Vagina (tissue), 2 donors: ENCODE measurements at regions of chr1 and their contacts with region 1.

Region 1: DNA sequence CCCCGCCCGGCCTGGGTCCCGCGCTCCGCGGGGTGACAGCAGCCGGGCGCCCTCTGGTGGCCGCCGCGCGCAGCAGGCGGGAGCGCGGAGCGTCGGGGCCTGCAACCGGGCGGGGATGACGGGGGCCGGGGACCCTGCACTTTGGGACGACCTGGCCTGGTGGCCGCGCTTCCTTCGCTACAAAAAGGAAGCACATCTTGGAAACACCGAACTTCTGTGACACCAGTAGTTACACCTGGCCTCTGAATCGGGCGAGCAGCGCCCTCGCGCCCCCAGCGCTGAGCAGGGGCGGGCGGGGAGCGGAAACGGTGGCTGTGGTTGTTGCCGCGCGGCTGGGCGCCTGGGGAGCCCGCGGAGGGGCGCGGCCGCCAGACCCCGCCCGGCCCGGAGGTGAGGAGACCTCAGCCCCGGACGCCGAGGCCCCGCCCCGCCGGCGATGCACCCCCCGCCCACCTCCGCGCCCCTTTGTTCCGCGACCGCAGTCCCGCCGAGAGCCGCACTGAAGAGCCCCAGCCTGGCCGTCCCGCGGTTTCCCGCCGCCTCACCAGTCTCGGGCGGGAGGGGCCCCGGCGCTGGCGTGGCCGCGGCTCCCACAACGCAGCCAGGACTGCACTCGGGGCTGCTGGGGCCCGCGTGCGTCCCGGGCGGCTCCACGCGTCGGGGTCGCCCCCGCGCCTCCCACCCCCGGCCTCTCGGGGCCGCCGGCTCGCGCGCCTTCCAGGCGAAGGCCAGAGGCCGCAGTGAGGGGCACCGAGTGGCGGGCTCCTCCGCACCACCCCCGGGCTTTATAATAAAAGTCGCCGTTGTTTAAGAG is 59.3 kb downstream of the H3-3A start:
- DNase-seq: no peak
- H3K4me3 ChIP-seq: peak overlapping the region; percentile 73 to 90
- H3K27ac ChIP-seq: peak overlapping the region; percentile 84
- H3K4me1 ChIP-seq: peaks cover 18% of the 10 kb centered on the region
- H3K27me3 ChIP-seq: no peaks in the 10 kb centered on the region
- CTCF ChIP-seq: peak; percentile 41 to 91 (median 67)
- POLR2A ChIP-seq: no peak

Region 2: DNA sequence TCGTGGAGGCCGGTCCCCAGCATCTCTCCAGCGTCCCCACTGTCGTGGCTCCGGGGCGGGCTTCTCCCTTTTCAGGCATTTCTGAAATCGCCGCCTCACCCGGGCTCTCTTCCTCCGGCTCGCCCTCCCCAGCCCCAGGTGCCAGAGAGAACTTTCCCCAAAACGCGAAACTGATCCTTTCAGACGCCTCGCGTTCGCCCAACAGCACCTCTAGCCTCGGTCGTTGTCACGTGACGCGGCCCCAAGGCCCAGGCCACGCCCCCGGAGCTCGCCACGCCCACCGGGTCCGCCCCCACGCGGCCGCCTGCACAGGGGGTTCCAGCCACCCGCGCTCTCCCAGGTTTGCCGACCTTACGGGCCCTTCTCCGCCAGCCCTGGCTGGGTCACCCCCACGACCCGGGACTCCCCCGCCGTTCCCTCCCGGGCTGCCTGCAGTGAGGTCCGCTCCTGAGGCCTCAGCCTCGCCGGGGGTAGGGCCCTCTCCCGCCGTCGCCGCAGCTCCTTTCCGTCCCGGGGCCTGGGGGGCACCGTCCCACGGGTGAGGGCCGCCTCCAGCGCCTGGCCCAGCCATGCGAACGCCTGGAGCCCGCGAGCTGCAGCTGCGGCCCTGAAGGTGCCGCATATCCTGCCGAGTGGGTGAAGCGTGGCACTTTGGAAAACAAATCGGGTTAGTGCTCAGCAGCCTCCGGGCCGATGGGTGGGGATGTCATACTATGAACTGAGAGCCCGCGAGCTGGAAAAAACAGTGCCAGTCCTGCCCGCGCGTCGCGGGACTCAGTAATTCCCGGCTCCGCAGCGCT is 38.3 kb before region 1 on chr1:
- intact Hi-C with region 1: loop called (anchors 5 kb)
- DNase-seq: no peak
- H3K4me3 ChIP-seq: peak overlapping the region; percentile 81 to 84
- H3K27ac ChIP-seq: peak overlapping the region; percentile 70
- H3K4me1 ChIP-seq: peaks cover 7% of the 10 kb centered on the region
- H3K27me3 ChIP-seq: no peaks in the 10 kb centered on the region
- CTCF ChIP-seq: no peak
- POLR2A ChIP-seq: peak in 1 of 2 donors; percentile 35

Region 3: GRCh38 chr1:226186124-226187018 is 64.6 kb after region 1 on chr1 and contains the start of gene ACBD3:
- intact Hi-C with region 1: loop called (anchors 5 kb)
- DNase-seq: peak in 1 of 2 donors; percentile 92
- H3K4me3 ChIP-seq: peak within 1 kb of the TSS; percentile 88 to 94
- H3K27ac ChIP-seq: peak within 1 kb of the TSS; percentile 96
- H3K4me1 ChIP-seq: peaks cover 48% of the 10 kb centered on the region
- H3K27me3 ChIP-seq: no peaks in the 10 kb centered on the region
- CTCF ChIP-seq: no peak
- POLR2A ChIP-seq: peak in 1 of 2 donors; percentile 80
- total RNA-seq, gene ACBD3: 38.1 TPM